Left ventricle myocardium superior (tissue), 1 donor: ENCODE measurements at regions of chr1 and their contacts with region 1.

Region 1: DNA sequence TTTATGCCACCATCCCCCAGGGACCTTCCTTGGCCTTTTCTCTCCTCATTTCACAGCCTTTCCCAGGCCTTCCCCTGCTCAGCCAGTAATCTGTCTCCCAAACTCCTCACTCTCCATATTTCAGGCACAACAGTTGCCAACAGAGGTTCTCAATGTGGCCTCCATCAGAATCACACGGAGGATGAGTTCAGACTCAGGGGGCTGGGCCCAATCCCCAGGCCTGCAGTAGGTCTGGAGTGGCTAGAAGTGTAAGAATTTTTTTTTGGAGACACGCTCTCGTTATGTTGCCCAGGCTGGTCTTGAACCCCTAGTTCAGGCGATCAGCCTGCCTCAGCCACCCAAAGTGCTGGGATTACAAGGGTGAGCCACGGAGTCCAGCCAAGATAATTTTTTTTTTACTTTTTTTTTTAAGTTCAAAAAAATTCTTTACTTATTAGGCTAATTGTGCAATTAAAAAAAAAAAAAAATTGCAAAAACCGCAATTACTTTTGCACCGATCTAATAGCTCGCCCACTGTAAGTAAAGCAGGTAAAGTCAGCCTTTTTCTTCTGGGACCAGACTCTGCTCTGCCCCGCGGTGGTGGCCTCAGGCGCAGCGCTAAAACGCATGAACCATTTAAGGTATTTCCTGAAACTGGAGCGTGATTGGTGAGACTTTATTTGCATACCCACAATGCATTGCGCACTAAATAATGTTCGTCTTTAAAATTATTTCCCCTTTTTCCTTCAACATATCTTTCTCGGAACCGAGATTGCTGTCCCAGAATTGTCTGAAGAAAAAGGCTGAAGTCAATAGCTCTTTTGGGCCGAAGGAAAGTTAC is 18.7 kb downstream of the KIAA2013 start:
- DNase-seq: peak; percentile 90
- ATAC-seq: peak; percentile 84

Region 2: GRCh38 chr1:11979851-11980675 is 72.6 kb after region 1 on chr1 and contains the start of gene MFN2:
- intact Hi-C with region 1: loop called (anchors 5 kb)
- DNase-seq: peak; percentile 98
- ATAC-seq: peak; percentile 88
- total RNA-seq, gene MFN2: 688 TPM